Psoas muscle (tissue), 8 donors: ENCODE measurements at regions of chr4 and their contacts with region 1.

Region 1: GRCh38 chr4:182806259-182807252 is 110.6 kb downstream of the DCTD start:
- DNase-seq: peak; percentile 75 to 84
- ATAC-seq: peak; percentile 75 to 97 (median 88)
- H3K4me3 ChIP-seq: peak overlapping the region; percentile 70
- H3K27ac ChIP-seq: no peak overlapping the region
- H3K4me1 ChIP-seq: no peaks in the 10 kb centered on the region
- H3K27me3 ChIP-seq: no peaks in the 10 kb centered on the region
- CTCF ChIP-seq: peak; percentile 81

Region 2: GRCh38 chr4:181143250-181143854 is 1663.2 kb before region 1 on chr4:
- intact Hi-C with region 1: loop called in 1 of 2 experiments (anchors 10 kb)
- DNase-seq: peak; percentile 71 to 84
- ATAC-seq: peak in 3 of 4 donors; percentile 51 to 76 (median 55)
- H3K4me3 ChIP-seq: no peak overlapping the region
- H3K27ac ChIP-seq: no peak overlapping the region
- H3K4me1 ChIP-seq: no peaks in the 10 kb centered on the region
- H3K27me3 ChIP-seq: no peaks in the 10 kb centered on the region
- CTCF ChIP-seq: peak; percentile 93

Region 3: GRCh38 chr4:181301735-181302710 is 1504.5 kb before region 1 on chr4:
- intact Hi-C with region 1: loop called in 1 of 2 experiments (anchors 10 kb)
- DNase-seq: peak; percentile 17 to 59
- ATAC-seq: peak in 1 of 4 donors; percentile 61
- H3K4me3 ChIP-seq: no peak overlapping the region
- H3K27ac ChIP-seq: no peak overlapping the region
- H3K4me1 ChIP-seq: peaks cover 6% of the 10 kb centered on the region
- H3K27me3 ChIP-seq: no peaks in the 10 kb centered on the region
- CTCF ChIP-seq: peak; percentile 58

Region 4: GRCh38 chr4:182478475-182478874 is 328.1 kb before region 1 on chr4:
- intact Hi-C with region 1: loop called in 1 of 2 experiments (anchors 5 kb)
- DNase-seq: no peak
- ATAC-seq: peak in 1 of 4 donors; percentile 68
- H3K4me3 ChIP-seq: no peak overlapping the region
- H3K27ac ChIP-seq: no peak overlapping the region
- H3K4me1 ChIP-seq: peaks cover 7% of the 10 kb centered on the region
- H3K27me3 ChIP-seq: no peaks in the 10 kb centered on the region
- CTCF ChIP-seq: peak; percentile 74